ENCODE measurements at regions of chr13 and their contacts with region 1.

Region 1: GRCh38 chr13:42110410-42111155 is 62.1 kb downstream of the DGKH start:
- DNase-seq: peak; percentile 62
- H3K4me3 Mint-ChIP-seq: no peak overlapping the region
- H3K27ac Mint-ChIP-seq: no peak overlapping the region
- H3K4me1 Mint-ChIP-seq: peaks cover 7% of the 10 kb centered on the region
- H3K27me3 Mint-ChIP-seq: no peaks in the 10 kb centered on the region

Region 2: DNA sequence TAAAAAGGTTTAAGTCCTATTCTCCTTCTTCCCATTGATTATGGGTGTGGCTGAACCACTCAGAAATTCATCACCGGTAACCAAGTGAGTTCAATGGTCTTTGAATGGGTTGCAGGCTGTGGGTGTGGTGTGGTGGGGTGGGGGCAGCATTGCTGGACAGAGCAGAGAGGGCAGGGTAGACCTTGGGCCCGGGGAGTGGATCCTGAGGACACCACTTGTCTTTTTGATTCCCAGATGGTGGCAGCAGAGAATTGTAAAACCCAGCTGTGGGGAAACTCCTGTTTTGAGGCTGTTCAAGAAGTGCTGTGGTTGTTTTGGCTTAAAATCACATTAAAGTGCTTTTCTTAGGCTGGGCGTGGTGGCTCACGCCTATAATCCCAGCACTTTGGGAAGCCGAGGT is 699.1 kb before region 1 on chr13:
- CTCF ChIA-PET with region 1: no interaction called
- intact Hi-C with region 1: loop called (anchors 1 kb)
- DNase-seq: peak; percentile 56
- H3K4me3 Mint-ChIP-seq: no peak overlapping the region
- H3K27ac Mint-ChIP-seq: no peak overlapping the region
- H3K4me1 Mint-ChIP-seq: peaks cover 2% of the 10 kb centered on the region
- H3K27me3 Mint-ChIP-seq: no peaks in the 10 kb centered on the region

Region 3: GRCh38 chr13:41428155-41428554 is 682.4 kb before region 1 on chr13:
- CTCF ChIA-PET with region 1: no interaction called
- intact Hi-C with region 1: loop called (anchors 1 kb)
- DNase-seq: peak; percentile 35
- H3K4me3 Mint-ChIP-seq: no peak overlapping the region
- H3K27ac Mint-ChIP-seq: no peak overlapping the region
- H3K4me1 Mint-ChIP-seq: peaks cover 6% of the 10 kb centered on the region
- H3K27me3 Mint-ChIP-seq: no peaks in the 10 kb centered on the region

Region 4: GRCh38 chr13:41802684-41803444 is 307.7 kb before region 1 on chr13:
- CTCF ChIA-PET with region 1: no interaction called
- intact Hi-C with region 1: no loop called
- DNase-seq: peak; percentile 18
- H3K4me3 Mint-ChIP-seq: no peak overlapping the region
- H3K27ac Mint-ChIP-seq: peak overlapping the region; percentile 68
- H3K4me1 Mint-ChIP-seq: peaks cover 14% of the 10 kb centered on the region
- H3K27me3 Mint-ChIP-seq: no peaks in the 10 kb centered on the region

Region 5: GRCh38 chr13:41905600-41906254 is 204.9 kb before region 1 on chr13:
- CTCF ChIA-PET with region 1: interaction called, 5 read pairs
- intact Hi-C with region 1: loop called (anchors 1 kb)
- DNase-seq: no peak
- H3K4me3 Mint-ChIP-seq: no peak overlapping the region
- H3K27ac Mint-ChIP-seq: no peak overlapping the region
- H3K4me1 Mint-ChIP-seq: peaks cover 24% of the 10 kb centered on the region
- H3K27me3 Mint-ChIP-seq: no peaks in the 10 kb centered on the region

Region 6: DNA sequence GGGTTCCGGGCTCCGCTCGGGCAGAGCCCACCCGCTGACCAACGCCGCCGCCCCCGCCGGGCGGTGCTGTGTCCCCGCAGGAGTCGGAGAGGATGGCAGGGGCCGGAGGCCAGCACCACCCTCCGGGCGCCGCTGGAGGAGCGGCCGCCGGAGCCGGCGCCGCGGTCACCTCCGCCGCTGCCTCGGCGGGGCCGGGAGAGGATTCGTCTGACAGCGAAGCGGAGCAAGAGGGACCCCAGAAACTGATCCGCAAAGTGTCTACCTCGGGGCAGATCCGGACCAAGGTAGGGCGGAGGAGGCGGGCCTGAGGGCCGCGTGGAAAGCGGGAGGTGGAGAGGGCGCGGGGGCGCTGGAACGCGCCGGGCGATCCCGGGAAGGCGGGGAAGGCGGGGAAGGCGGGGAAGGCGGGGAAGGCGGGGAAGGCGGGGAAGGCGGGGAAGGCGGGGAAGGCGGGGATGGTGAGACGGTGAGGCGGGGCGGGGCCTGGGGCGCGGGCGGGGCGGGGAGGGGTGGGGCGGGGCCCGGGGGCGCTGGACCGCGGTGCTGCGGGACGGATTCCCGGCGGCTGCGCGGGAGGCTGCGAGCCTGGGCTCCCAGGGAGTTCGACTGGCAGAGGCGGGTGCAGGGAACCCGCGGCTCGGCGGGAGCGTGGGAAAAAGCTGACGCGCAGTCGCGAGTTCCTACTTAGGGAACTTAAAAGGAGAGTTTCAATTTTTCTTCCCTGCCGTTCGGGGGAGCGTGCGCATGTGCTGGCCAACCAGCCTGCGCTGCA is 61.7 kb before region 1 on chr13:
- CTCF ChIA-PET with region 1: interaction called, 3 read pairs
- intact Hi-C with region 1: loop called (anchors 5 kb)
- DNase-seq: peak; percentile 71
- H3K4me3 Mint-ChIP-seq: peak overlapping the region; percentile 89
- H3K27ac Mint-ChIP-seq: peak overlapping the region; percentile 78
- H3K4me1 Mint-ChIP-seq: peaks cover 21% of the 10 kb centered on the region
- H3K27me3 Mint-ChIP-seq: peaks cover 3% of the 10 kb centered on the region

Region 7: DNA sequence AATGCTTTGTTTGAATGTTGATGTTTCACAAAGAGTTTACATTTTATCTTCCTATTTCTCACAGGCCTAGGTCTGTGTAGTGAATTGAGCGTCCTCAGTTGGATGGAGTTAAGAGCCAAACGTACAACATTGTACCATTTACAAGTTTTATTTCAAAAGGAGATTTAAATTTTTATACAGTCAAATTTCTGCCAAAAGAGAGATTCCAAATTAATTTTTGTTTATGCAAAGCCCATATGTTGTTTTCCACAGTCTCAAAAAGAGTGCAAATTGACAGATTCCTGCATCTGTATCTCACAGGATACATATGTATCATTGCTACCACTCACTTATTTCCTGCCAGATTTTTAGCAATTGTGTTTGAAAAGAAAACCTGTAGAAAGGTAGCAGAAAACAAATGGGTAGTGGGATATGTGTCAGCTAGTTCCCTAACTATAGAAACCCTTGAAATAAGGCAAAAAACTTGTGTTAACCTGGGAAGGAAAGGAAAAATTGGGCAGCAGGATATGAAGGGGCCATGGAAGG is 16.0 kb before region 1 on chr13:
- CTCF ChIA-PET with region 1: no interaction called
- intact Hi-C with region 1: no loop called
- DNase-seq: no peak
- H3K4me3 Mint-ChIP-seq: no peak overlapping the region
- H3K27ac Mint-ChIP-seq: no peak overlapping the region
- H3K4me1 Mint-ChIP-seq: no peaks in the 10 kb centered on the region
- H3K27me3 Mint-ChIP-seq: no peaks in the 10 kb centered on the region

Region 8: GRCh38 chr13:42215578-42216421 is 105.2 kb after region 1 on chr13:
- CTCF ChIA-PET with region 1: no interaction called
- intact Hi-C with region 1: loop called (anchors 1 kb)
- DNase-seq: peak; percentile 62
- H3K4me3 Mint-ChIP-seq: no peak overlapping the region
- H3K27ac Mint-ChIP-seq: no peak overlapping the region
- H3K4me1 Mint-ChIP-seq: no peaks in the 10 kb centered on the region
- H3K27me3 Mint-ChIP-seq: no peaks in the 10 kb centered on the region

Measured in activated naive CD4-positive, alpha-beta T cell treated with anti-CD3 and anti-CD28 coated beads for 36 hours (primary cell).